HCT116 (cell line): ENCODE measurements at regions of chr2 and their contacts with region 1.

Region 1: GRCh38 chr2:17851731-17852585 is 26.5 kb upstream of the KCNS3 start:
- DNase-seq: peak; percentile 51
- ATAC-seq: peak; percentile 87
- H3K4me3 ChIP-seq: no peak overlapping the region
- H3K27ac ChIP-seq: no peak overlapping the region
- H3K4me1 ChIP-seq: no peaks in the 10 kb centered on the region
- H3K27me3 ChIP-seq: peaks cover 24% of the 10 kb centered on the region
- CTCF ChIP-seq: peak; percentile 80 to 93 (median 90)
- POLR2A ChIP-seq: no peak
- RAD21 ChIP-seq: peak; percentile 97

Region 2: GRCh38 chr2:17232776-17233556 is 619.0 kb before region 1 on chr2:
- CTCF ChIA-PET with region 1: no interaction called
- POLR2A ChIA-PET with region 1: no interaction called
- RAD21 ChIA-PET with region 1: no interaction called
- intact Hi-C with region 1: no loop called
- DNase-seq: no peak
- ATAC-seq: no peak
- H3K4me3 ChIP-seq: no peak overlapping the region
- H3K27ac ChIP-seq: no peak overlapping the region
- H3K4me1 ChIP-seq: no peaks in the 10 kb centered on the region
- H3K27me3 ChIP-seq: peaks cover 12% of the 10 kb centered on the region
- CTCF ChIP-seq: no peak
- POLR2A ChIP-seq: no peak
- RAD21 ChIP-seq: no peak

Region 3: GRCh38 chr2:17470855-17471641 is 380.9 kb before region 1 on chr2:
- CTCF ChIA-PET with region 1: no interaction called
- POLR2A ChIA-PET with region 1: no interaction called
- RAD21 ChIA-PET with region 1: no interaction called
- intact Hi-C with region 1: loop called (anchors 2 kb)
- DNase-seq: peak; percentile 44
- ATAC-seq: peak; percentile 83
- H3K4me3 ChIP-seq: no peak overlapping the region
- H3K27ac ChIP-seq: no peak overlapping the region
- H3K4me1 ChIP-seq: no peaks in the 10 kb centered on the region
- H3K27me3 ChIP-seq: no peaks in the 10 kb centered on the region
- CTCF ChIP-seq: peak; percentile 64 to 88 (median 82)
- POLR2A ChIP-seq: no peak
- RAD21 ChIP-seq: peak; percentile 88

Region 4: DNA sequence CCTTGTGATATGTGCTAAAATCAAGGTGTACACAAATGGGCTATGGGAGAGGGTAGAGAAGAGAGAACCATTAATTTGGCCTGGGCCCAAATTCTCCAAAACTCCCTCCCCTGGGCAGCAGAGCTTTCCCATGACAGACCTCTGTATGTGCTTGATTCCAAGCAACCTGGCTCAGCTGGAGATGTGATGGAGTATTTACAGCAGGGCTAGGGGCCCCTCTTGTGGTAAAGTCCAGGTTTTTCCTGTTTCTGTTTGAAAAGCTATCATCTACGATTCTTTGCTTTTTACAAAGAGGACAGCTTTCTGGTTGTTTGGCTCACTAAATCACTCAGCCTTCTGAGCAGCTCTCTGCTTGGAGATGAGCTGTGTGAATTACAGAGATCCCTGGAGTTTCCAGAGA is 66.8 kb after region 1 on chr2:
- CTCF ChIA-PET with region 1: interaction called, 7 read pairs
- POLR2A ChIA-PET with region 1: no interaction called
- RAD21 ChIA-PET with region 1: interaction called in 1 of 2 experiments, 3 read pairs
- intact Hi-C with region 1: loop called (anchors 2 kb)
- DNase-seq: no peak
- ATAC-seq: no peak
- H3K4me3 ChIP-seq: no peak overlapping the region
- H3K27ac ChIP-seq: no peak overlapping the region
- H3K4me1 ChIP-seq: no peaks in the 10 kb centered on the region
- H3K27me3 ChIP-seq: no peaks in the 10 kb centered on the region
- CTCF ChIP-seq: peak; percentile 3 to 26 (median 15); a peak in 2 of 6 replicates
- POLR2A ChIP-seq: no peak
- RAD21 ChIP-seq: peak; percentile 46

Region 5: GRCh38 chr2:18117592-18117991 is 265.6 kb after region 1 on chr2:
- CTCF ChIA-PET with region 1: interaction called, 11 read pairs
- POLR2A ChIA-PET with region 1: no interaction called
- RAD21 ChIA-PET with region 1: interaction called in 1 of 2 experiments, 3 read pairs
- intact Hi-C with region 1: loop called (anchors 1 kb)
- DNase-seq: peak; percentile 13
- ATAC-seq: peak; percentile 99
- H3K4me3 ChIP-seq: no peak overlapping the region
- H3K27ac ChIP-seq: no peak overlapping the region
- H3K4me1 ChIP-seq: no peaks in the 10 kb centered on the region
- H3K27me3 ChIP-seq: peaks cover 24% of the 10 kb centered on the region; the same call in 1 of the 2 replicates
- CTCF ChIP-seq: peak; percentile 82 to 98 (median 83)
- POLR2A ChIP-seq: no peak
- RAD21 ChIP-seq: peak; percentile 80

Region 6: DNA sequence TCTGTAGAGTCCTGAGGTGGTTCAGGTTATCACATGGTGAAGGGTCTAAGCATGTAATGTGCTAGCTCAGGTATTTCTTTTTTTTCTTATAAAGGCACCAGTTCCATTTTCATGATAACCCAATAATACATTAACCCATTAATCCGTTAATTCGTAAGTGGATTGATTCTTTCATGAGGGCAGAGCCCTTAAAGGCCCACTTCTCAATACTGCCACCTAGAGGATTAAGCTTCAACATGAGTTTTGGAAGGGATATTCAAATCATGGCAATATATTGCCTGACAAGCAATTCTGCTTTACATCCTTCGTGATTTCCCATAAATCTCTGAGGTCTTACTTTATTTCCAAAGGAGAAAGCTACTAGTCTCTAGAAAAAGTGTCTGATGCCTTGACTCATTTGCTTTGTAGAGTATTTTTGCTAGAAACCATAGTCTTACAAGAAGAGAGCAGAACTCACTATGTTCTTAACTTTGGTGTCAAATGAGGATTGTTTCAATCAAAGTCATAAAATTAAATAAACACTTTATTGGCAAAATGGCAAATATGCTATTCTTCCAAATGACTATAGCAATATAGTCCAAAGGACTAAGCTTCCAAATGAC is 297.8 kb after region 1 on chr2:
- CTCF ChIA-PET with region 1: interaction called, 5 read pairs
- POLR2A ChIA-PET with region 1: no interaction called
- RAD21 ChIA-PET with region 1: no interaction called
- intact Hi-C with region 1: loop called (anchors 1 kb)
- DNase-seq: peak; percentile 42
- ATAC-seq: peak; percentile 73
- H3K4me3 ChIP-seq: no peak overlapping the region
- H3K27ac ChIP-seq: no peak overlapping the region
- H3K4me1 ChIP-seq: no peaks in the 10 kb centered on the region
- H3K27me3 ChIP-seq: peaks cover 3% of the 10 kb centered on the region; the same call in 1 of the 2 replicates
- CTCF ChIP-seq: peak; percentile 48 to 78 (median 61); a peak in 5 of 6 replicates
- POLR2A ChIP-seq: no peak
- RAD21 ChIP-seq: peak; percentile 56

Region 7: DNA sequence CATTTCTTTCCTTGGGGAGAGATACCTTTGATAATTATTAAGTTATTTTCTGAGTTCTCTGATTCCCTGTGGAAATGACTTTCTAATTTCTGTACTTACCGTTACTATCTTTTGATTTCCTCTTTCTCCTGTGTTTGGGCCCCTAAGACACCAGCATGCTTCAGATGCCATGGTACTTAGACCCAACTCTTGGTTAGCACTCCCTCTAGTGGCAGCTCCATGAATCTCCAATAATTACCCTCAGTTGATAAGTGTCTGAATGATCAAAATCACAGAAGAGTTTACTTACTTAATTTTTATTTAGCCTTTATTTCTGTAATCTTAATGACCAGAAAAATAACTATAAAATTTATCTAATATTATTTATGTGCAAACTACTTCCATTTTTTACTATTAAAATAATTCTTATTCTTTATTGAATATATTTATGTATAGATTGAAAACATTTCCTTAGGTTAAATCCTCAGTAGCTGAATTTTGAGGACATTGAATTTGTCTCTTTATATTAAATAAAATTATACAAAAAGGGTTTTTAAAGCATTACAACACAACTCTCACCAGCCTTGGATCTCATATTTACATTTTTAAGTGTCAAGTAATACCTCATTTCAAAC is 326.9 kb after region 1 on chr2:
- CTCF ChIA-PET with region 1: interaction called, 16 read pairs
- POLR2A ChIA-PET with region 1: no interaction called
- RAD21 ChIA-PET with region 1: no interaction called
- intact Hi-C with region 1: loop called (anchors 1 kb)
- DNase-seq: peak; percentile 40
- ATAC-seq: peak; percentile 90
- H3K4me3 ChIP-seq: no peak overlapping the region
- H3K27ac ChIP-seq: no peak overlapping the region
- H3K4me1 ChIP-seq: no peaks in the 10 kb centered on the region
- H3K27me3 ChIP-seq: peaks cover 10% of the 10 kb centered on the region
- CTCF ChIP-seq: peak; percentile 53 to 78 (median 76); a peak in 5 of 6 replicates
- POLR2A ChIP-seq: no peak
- RAD21 ChIP-seq: peak; percentile 66

Region 8: DNA sequence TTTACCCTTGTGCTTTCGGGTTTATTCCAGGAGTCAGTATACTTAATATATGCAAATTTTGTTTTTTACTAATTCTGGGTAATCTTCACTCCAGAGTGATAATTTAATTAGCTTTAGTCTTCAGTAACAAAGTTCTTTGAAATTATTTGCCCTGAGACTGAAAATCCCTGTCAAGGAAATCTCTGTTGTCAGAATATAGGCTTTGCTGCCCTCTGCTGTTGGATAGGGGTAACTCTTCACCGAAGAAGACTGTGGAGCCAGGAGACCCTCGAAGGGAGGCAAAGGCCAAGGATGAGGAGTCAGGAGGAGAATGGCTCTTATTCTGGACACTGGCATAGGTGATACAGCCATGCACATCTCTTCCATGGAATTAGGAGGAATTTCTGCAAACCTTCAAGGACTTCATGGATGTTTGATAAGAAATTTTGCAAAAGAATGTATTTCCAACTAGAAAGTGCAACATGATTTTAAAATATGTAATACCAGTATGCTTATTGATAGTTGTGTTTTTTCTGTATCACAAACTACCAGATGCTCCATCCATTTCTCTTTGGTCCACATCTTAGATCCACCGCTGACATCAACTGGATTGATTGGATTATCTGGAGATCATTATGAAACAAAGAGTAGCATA is 526.2 kb after region 1 on chr2:
- CTCF ChIA-PET with region 1: interaction called, 6 read pairs
- POLR2A ChIA-PET with region 1: no interaction called
- RAD21 ChIA-PET with region 1: no interaction called
- intact Hi-C with region 1: loop called (anchors 1 kb)
- DNase-seq: peak; percentile 19
- ATAC-seq: peak; percentile 84
- H3K4me3 ChIP-seq: no peak overlapping the region
- H3K27ac ChIP-seq: no peak overlapping the region
- H3K4me1 ChIP-seq: no peaks in the 10 kb centered on the region
- H3K27me3 ChIP-seq: peaks cover 29% of the 10 kb centered on the region
- CTCF ChIP-seq: peak; percentile 63 to 84 (median 74); a peak in 5 of 6 replicates
- POLR2A ChIP-seq: no peak
- RAD21 ChIP-seq: peak; percentile 76